ENCODE measurements at regions of chr6 and their contacts with region 1.

Region 1: GRCh38 chr6:45737331-45738056 is 278.2 kb downstream of the CLIC5 start:
- DNase-seq: peak; percentile 35
- H3K4me3 Mint-ChIP-seq: peak overlapping the region; percentile 47
- H3K27ac Mint-ChIP-seq: peak overlapping the region; percentile 92
- H3K4me1 Mint-ChIP-seq: peaks cover 69% of the 10 kb centered on the region
- H3K27me3 Mint-ChIP-seq: no peaks in the 10 kb centered on the region

Region 2: DNA sequence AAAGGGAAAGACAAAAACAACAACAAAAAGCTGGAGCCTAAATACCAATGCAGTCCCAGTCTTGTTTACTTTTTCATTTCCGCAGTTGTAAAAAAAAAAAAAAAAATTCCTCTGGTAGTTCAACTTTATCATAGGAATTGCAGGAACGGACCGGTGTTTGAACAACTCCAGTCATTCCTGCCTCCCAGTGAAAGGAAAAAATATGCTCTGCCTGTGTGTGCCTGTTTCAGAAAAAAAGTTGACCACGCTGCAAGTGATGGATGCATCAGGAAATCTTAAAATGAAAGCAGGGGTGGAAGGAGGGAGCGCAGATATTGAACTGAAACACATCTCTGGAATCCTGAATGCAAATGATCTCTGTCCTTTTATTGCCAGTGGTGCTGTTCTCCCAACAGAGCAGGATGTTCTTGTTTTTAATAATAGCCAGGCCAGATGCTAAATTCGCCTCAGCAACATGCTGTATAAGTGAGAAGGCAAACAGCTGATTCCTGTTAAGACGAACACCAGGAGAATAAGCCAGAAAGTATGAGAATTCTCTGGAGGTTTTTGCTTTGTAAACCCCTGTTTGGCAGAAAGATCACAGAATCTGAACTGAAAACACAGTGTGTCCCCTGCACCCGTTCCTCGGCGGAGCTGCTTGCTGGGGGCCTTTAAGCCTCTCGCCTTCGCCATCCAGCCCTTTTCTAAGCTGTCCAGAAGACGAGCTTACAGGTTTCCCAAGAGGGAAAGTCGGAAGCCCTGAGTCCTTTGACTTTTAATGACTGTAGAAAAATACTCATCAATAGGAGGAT is 181.3 kb before region 1 on chr6:
- intact Hi-C with region 1: no loop called
- DNase-seq: no peak
- H3K4me3 Mint-ChIP-seq: no peak overlapping the region
- H3K27ac Mint-ChIP-seq: no peak overlapping the region
- H3K4me1 Mint-ChIP-seq: peaks cover 69% of the 10 kb centered on the region
- H3K27me3 Mint-ChIP-seq: no peaks in the 10 kb centered on the region

Region 3: GRCh38 chr6:45759472-45759810 is 21.9 kb after region 1 on chr6:
- intact Hi-C with region 1: loop called (anchors 1 kb)
- DNase-seq: no peak
- H3K4me3 Mint-ChIP-seq: no peak overlapping the region
- H3K27ac Mint-ChIP-seq: peak overlapping the region; percentile 65
- H3K4me1 Mint-ChIP-seq: peaks cover 30% of the 10 kb centered on the region
- H3K27me3 Mint-ChIP-seq: no peaks in the 10 kb centered on the region

Region 4: GRCh38 chr6:45822246-45822812 is 84.8 kb after region 1 on chr6:
- intact Hi-C with region 1: loop called (anchors 2 kb)
- DNase-seq: no peak
- H3K4me3 Mint-ChIP-seq: peak overlapping the region; percentile 47
- H3K27ac Mint-ChIP-seq: peak overlapping the region; percentile 89
- H3K4me1 Mint-ChIP-seq: peaks cover 40% of the 10 kb centered on the region
- H3K27me3 Mint-ChIP-seq: no peaks in the 10 kb centered on the region

Region 5: GRCh38 chr6:45830441-45831139 is 93.1 kb after region 1 on chr6:
- intact Hi-C with region 1: loop called (anchors 1 kb)
- DNase-seq: peak; percentile 48
- H3K4me3 Mint-ChIP-seq: peak overlapping the region; percentile 79
- H3K27ac Mint-ChIP-seq: peak overlapping the region; percentile 94
- H3K4me1 Mint-ChIP-seq: peaks cover 61% of the 10 kb centered on the region
- H3K27me3 Mint-ChIP-seq: no peaks in the 10 kb centered on the region

Region 6: DNA sequence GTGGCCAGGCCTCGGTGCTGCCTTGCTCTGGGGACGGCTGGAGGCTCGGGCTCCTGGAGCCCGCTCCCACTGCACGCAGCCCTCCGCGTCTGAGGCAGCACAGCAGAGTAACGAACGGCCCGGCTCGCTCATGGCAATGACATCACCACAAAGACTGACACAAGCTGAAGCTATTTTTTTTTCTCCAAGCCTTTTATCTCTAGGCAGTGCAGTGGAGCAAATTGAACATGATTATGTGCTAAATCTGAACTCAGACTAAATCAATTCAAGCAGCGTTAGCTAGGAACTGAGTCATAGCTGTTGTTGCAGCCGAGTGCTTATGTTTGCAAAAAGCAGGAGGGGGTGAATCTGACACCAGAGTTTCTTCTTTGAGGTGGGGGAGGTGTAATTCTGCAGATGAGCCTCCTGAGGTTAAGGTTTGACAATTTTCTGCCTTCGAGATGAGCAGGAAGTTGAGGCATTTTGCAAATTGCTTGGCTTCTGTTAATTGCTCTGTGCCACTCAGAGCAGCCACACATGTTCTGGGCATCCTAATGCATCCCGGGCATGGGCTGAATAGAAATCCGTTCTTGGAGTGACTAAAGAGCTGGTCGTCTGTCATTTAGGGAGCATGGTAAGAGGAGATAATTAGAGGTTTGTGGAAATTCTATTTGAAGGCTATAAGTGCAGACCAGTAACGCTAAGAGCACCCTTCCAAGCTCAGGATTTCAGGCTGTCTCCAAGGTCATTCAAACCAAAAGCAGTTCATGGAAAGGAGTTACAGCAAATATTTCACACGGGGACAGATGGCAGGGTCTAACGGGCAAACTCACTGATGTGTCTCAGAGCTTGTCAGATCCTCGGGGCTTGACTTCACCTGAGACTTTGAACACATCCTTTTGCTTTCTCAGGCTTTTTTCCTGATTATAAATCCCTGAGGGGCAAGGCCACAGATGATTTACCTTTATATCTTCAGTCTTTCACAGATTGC is 588.4 kb after region 1 on chr6:
- intact Hi-C with region 1: no loop called
- DNase-seq: no peak
- H3K4me3 Mint-ChIP-seq: no peak overlapping the region
- H3K27ac Mint-ChIP-seq: no peak overlapping the region
- H3K4me1 Mint-ChIP-seq: peaks cover 5% of the 10 kb centered on the region
- H3K27me3 Mint-ChIP-seq: peaks cover 20% of the 10 kb centered on the region